Endothelial cell of umbilical vein (primary cell): ENCODE measurements at regions of chr5 and their contacts with region 1.

Region 1: GRCh38 chr5:79514391-79515105 is 614 bp upstream of the HOMER1 start:
- DNase-seq: peak; percentile 86
- H3K4me3 ChIP-seq: peak overlapping the region; percentile 80 to 89 (median 87)
- H3K27ac ChIP-seq: peak overlapping the region; percentile 68
- H3K4me1 ChIP-seq: peaks cover 23% of the 10 kb centered on the region
- H3K27me3 ChIP-seq: peaks cover 0 to 2% of the 10 kb centered on the region in 2 experiments
- CTCF ChIP-seq: no peak
- POLR2A ChIP-seq: peak; percentile 11

Region 2: DNA sequence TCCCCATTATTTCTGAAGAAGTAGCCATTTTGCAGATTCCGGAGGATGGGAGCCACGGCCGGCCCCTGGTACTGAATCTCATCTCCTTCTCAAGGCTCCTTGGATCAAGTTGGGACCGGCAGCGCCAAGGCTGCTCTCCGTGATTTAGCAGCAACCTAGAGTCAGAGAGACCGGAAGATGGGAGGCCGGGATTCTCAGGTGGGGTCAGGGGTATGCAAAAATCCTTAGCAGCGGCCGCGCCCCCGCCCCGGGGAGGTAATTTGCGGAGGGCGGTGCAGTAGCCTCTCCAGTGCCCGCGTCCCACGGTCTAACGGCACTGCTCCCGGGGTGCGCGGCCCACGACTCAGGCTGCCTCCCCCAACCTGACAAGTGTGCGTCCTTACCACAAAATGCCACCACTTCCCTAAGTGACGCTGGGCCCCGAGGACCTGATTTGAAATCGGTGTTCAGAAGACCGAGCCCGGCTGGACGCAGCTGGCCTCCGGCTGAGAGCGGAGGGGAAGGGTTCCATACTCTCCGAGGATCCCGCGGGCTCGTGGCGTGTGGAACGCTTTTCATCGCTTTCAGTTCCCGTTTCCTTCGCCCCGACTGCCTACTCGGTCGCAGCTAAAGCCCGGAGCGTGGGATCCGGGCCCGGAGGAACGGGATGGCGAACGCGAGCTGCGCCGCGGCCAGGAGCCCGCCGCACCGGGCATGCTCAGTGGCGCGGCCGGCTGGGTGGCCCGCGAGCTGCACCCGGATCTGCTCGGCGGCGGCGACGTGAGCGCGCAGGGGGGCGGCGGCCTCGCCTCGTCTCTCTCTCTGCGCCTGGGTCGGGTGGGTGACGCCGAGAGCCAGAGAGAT is 1154.5 kb before region 1 on chr5 and contains the start of gene SCAMP1:
- CTCF ChIA-PET with region 1: no interaction called
- POLR2A ChIA-PET with region 1: no interaction called
- dilution Hi-C with region 1: no loop called
- intact Hi-C with region 1: loop called (anchors 5 kb)
- DNase-seq: peak; percentile 95
- H3K4me3 ChIP-seq: peak within 1 kb of the TSS; percentile 72 to 95 (median 75)
- H3K27ac ChIP-seq: peak within 1 kb of the TSS; percentile 65
- H3K4me1 ChIP-seq: peaks cover 14% of the 10 kb centered on the region
- H3K27me3 ChIP-seq: no peaks in the 10 kb centered on the region
- CTCF ChIP-seq: peak; percentile 10 to 28
- POLR2A ChIP-seq: peak; percentile 73
- total RNA-seq, gene SCAMP1: 29.0 and 30.7 TPM in 2 replicates

Region 3: DNA sequence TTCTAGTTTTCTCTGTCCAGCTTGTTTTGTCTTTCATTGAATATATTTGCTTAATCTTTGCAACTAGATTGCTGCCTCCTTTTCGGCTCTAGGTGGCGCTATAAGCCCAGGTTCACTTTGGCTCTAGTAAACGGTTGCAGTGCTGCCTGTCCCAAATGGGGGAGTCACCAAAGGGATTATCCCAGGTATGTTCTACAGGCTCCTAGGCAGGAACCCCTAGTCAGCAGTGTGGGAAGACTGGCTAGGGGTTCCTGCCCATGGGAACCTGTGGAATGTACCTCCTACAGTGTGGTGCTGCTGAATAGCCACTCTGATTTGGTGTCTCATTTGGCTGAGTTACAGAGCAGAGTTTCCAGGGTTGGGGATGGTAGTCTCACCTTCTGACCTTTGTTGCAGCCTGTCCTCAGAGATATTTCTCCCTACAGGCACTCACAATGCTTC is 614.6 kb before region 1 on chr5:
- CTCF ChIA-PET with region 1: no interaction called
- POLR2A ChIA-PET with region 1: no interaction called
- dilution Hi-C with region 1: no loop called
- intact Hi-C with region 1: no loop called
- DNase-seq: peak; percentile 69
- H3K4me3 ChIP-seq: no peak overlapping the region
- H3K27ac ChIP-seq: no peak overlapping the region
- H3K4me1 ChIP-seq: no peaks in the 10 kb centered on the region
- H3K27me3 ChIP-seq: no peaks in the 10 kb centered on the region
- CTCF ChIP-seq: peak; percentile 78 to 82
- POLR2A ChIP-seq: no peak

Region 4: GRCh38 chr5:79235634-79236363 is 278.7 kb before region 1 on chr5 and contains the start of gene JMY:
- CTCF ChIA-PET with region 1: no interaction called
- POLR2A ChIA-PET with region 1: no interaction called
- dilution Hi-C with region 1: no loop called
- intact Hi-C with region 1: loop called (anchors 5 kb)
- DNase-seq: peak; percentile 81
- H3K4me3 ChIP-seq: peak within 1 kb of the TSS; percentile 36 to 73 (median 64)
- H3K27ac ChIP-seq: peak within 1 kb of the TSS; percentile 54
- H3K4me1 ChIP-seq: peaks cover 10% of the 10 kb centered on the region
- H3K27me3 ChIP-seq: no peaks in the 10 kb centered on the region
- CTCF ChIP-seq: peak in 1 of 2 donors; percentile 22
- POLR2A ChIP-seq: peak; percentile 87
- total RNA-seq, gene JMY: 6.3 and 6.5 TPM in 2 replicates

Region 5: DNA sequence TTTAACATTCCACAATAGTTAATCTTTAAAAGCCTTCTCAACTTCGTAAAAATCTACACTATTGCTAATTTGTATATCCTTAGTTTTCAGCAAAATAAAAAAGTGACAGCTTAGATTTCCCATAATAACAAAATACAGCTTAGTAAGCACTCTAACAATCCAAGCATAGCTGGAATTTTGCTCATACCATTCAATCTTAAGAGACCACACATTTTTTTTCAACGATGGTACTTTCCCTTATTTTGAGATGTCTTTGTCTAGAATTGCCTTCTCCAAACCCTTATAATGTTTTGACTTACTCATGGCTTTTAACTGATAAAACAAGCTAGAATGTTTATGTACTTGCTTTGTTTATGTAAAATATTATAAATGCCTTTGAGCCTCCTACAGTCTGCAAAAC is 66.2 kb before region 1 on chr5:
- CTCF ChIA-PET with region 1: no interaction called
- POLR2A ChIA-PET with region 1: no interaction called
- dilution Hi-C with region 1: no loop called
- intact Hi-C with region 1: no loop called
- DNase-seq: no peak
- H3K4me3 ChIP-seq: no peak overlapping the region
- H3K27ac ChIP-seq: no peak overlapping the region
- H3K4me1 ChIP-seq: no peaks in the 10 kb centered on the region
- H3K27me3 ChIP-seq: no peaks in the 10 kb centered on the region
- CTCF ChIP-seq: no peak
- POLR2A ChIP-seq: no peak

Region 6: GRCh38 chr5:79612667-79613198 is 98.2 kb after region 1 on chr5:
- CTCF ChIA-PET with region 1: no interaction called
- POLR2A ChIA-PET with region 1: no interaction called
- dilution Hi-C with region 1: no loop called
- intact Hi-C with region 1: loop called (anchors 1 kb)
- DNase-seq: no peak
- H3K4me3 ChIP-seq: peak overlapping the region; percentile 70 to 95 (median 95)
- H3K27ac ChIP-seq: peak overlapping the region; percentile 64
- H3K4me1 ChIP-seq: peaks cover 5% of the 10 kb centered on the region
- H3K27me3 ChIP-seq: no peaks in the 10 kb centered on the region
- CTCF ChIP-seq: peak in 1 of 2 donors; percentile 1
- POLR2A ChIP-seq: no peak

Region 7: GRCh38 chr5:79857714-79858409 is 343.3 kb after region 1 on chr5:
- CTCF ChIA-PET with region 1: no interaction called
- POLR2A ChIA-PET with region 1: no interaction called
- dilution Hi-C with region 1: no loop called
- intact Hi-C with region 1: no loop called
- DNase-seq: peak; percentile 66
- H3K4me3 ChIP-seq: no peak overlapping the region
- H3K27ac ChIP-seq: no peak overlapping the region
- H3K4me1 ChIP-seq: no peaks in the 10 kb centered on the region
- H3K27me3 ChIP-seq: no peaks in the 10 kb centered on the region
- CTCF ChIP-seq: peak; percentile 92 to 94
- POLR2A ChIP-seq: no peak

Region 8: DNA sequence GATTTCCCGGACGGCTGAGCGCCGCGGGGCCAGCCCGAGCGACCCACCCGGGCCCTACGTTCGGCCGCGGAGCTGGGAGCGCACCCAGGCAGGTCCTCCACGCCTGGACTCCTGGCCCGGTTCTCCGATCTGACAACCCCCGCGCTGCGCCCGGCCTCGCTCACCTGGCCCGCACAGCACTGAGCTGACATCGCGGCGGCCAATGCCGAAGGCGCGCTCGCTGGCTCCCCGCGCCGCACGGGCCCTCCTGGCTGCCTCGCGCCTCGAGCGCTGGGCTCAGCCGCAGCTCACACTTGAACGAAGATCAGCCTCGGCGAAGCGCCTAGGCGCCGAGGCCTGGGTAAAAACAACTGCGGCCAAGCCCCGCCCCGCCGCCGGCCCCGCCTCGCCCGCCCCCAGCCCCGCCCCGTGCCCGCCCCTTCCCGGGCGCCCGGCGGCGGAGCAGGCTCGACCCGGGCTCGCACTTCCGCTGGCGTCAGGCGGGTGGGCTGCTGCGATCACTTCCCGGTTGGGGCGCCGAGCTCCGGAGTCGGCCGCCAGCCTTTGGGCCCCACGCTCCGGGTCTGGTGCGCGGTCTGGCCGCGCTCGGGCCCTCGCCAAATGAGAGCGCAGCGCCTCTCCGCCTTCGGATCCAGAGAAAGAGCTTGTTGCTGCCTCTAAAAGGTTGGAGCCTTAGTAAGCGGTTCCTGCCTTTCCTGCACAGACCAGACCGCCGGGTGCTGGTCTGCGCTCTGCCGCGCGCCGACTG is 741.4 kb after region 1 on chr5 and contains the start of gene SERINC5:
- CTCF ChIA-PET with region 1: no interaction called
- POLR2A ChIA-PET with region 1: no interaction called
- dilution Hi-C with region 1: no loop called
- intact Hi-C with region 1: loop called (anchors 10 kb)
- DNase-seq: peak; percentile 79
- H3K4me3 ChIP-seq: peak within 1 kb of the TSS; percentile 64 to 85 (median 70)
- H3K27ac ChIP-seq: peak within 1 kb of the TSS; percentile 65
- H3K4me1 ChIP-seq: peaks cover 7% of the 10 kb centered on the region
- H3K27me3 ChIP-seq: no peaks in the 10 kb centered on the region
- CTCF ChIP-seq: peak in 1 of 2 donors; percentile 3
- POLR2A ChIP-seq: peak; percentile 96
- total RNA-seq, gene SERINC5: 9.9 and 10.1 TPM in 2 replicates